PC-3 (cell line): ENCODE measurements at regions of chr3 and their contacts with region 1.

Region 1: GRCh38 chr3:16828815-16829214 is 55.9 kb upstream of the PLCL2 start:
- DNase-seq: peak; percentile 84
- ATAC-seq: peak; percentile 86
- H3K4me3 ChIP-seq: no peak overlapping the region
- H3K27ac ChIP-seq: peak overlapping the region; percentile 35
- H3K4me1 ChIP-seq: peaks cover 14% of the 10 kb centered on the region
- H3K27me3 ChIP-seq: no peaks in the 10 kb centered on the region
- CTCF ChIP-seq: peak; percentile 80

Region 2: GRCh38 chr3:16768959-16769358 is 59.9 kb before region 1 on chr3:
- CTCF ChIA-PET with region 1: no interaction called
- POLR2A ChIA-PET with region 1: no interaction called
- intact Hi-C with region 1: no loop called
- DNase-seq: peak; percentile 21
- ATAC-seq: no peak
- H3K4me3 ChIP-seq: no peak overlapping the region
- H3K27ac ChIP-seq: no peak overlapping the region
- H3K4me1 ChIP-seq: peaks cover 22% of the 10 kb centered on the region
- H3K27me3 ChIP-seq: no peaks in the 10 kb centered on the region
- CTCF ChIP-seq: no peak

Region 3: DNA sequence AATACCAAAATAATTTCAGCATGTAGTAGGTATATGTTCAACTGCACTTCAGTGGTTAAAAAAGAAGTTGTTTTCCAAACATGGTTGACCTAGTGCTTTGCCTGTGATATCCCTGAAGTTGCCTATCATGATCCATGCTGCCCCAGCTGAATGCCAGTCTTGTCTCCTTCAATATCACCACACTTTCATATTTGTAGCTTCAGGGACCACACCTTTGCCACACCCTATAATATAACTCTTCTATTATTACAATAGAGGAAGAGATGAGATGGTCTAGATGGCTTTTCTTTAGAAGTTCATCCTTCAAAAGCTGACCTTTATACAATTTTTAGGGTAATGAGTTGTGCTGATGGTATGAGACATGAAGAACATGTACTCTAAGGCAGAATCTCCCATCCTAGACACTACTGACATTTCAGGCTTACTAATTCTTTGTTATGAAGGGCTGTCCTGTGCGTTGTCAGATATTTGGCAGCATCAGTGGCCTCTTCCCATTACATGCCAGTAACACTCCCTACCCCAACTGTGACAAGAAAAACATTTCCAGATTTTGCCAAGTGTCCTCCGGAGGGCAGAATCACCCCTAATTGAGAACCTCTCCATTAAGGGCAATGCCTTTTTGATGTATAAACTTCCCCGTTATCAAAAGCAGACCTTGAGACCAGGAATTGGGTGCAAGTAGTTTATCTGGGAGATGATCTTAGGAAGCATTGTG is 20.3 kb before region 1 on chr3:
- CTCF ChIA-PET with region 1: interaction called, 10 read pairs
- POLR2A ChIA-PET with region 1: no interaction called
- intact Hi-C with region 1: no loop called
- DNase-seq: peak; percentile 22
- ATAC-seq: peak; percentile 18; the same call in 1 of the 2 replicates
- H3K4me3 ChIP-seq: no peak overlapping the region
- H3K27ac ChIP-seq: no peak overlapping the region
- H3K4me1 ChIP-seq: no peaks in the 10 kb centered on the region
- H3K27me3 ChIP-seq: no peaks in the 10 kb centered on the region
- CTCF ChIP-seq: peak; percentile 24; the same call in 1 of the 2 replicates

Region 4: DNA sequence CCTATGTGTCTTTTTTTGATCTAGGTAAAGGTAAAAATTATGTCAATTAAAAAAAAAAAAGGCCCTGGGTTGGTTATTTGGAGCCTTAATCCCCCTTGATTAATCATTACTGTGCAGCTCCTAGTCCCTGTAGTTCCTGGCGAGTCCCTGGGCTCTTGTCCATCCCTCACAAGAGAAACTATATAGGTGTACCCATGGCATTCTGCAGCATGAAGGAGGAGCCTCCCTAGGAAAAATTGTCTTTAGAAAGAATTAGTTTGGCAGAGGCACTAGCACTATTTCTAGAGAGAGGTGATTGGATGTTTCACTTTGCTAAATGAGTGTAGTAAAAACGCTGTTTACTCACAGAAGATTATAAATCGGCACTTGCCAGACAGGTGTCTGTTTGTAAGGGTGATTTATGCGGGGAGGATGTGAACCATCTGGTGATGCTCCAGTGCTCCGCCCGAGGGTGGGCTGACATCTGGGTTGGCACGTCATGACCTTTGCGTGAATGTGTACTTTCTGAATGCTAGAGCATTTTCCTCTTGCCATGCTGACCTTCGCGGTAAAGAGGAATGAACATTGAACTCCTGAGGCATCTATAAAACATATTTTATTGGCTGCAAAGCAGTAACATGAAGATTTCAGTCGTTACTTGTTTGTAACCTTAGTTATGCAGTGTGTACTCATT is 68.6 kb after region 1 on chr3:
- CTCF ChIA-PET with region 1: interaction called, 9 read pairs
- POLR2A ChIA-PET with region 1: no interaction called
- intact Hi-C with region 1: loop called (anchors 1 kb)
- DNase-seq: peak; percentile 94
- ATAC-seq: peak; percentile 86
- H3K4me3 ChIP-seq: peak overlapping the region; percentile 52
- H3K27ac ChIP-seq: peak overlapping the region; percentile 85
- H3K4me1 ChIP-seq: peaks cover 25% of the 10 kb centered on the region
- H3K27me3 ChIP-seq: no peaks in the 10 kb centered on the region
- CTCF ChIP-seq: no peak

Region 5: DNA sequence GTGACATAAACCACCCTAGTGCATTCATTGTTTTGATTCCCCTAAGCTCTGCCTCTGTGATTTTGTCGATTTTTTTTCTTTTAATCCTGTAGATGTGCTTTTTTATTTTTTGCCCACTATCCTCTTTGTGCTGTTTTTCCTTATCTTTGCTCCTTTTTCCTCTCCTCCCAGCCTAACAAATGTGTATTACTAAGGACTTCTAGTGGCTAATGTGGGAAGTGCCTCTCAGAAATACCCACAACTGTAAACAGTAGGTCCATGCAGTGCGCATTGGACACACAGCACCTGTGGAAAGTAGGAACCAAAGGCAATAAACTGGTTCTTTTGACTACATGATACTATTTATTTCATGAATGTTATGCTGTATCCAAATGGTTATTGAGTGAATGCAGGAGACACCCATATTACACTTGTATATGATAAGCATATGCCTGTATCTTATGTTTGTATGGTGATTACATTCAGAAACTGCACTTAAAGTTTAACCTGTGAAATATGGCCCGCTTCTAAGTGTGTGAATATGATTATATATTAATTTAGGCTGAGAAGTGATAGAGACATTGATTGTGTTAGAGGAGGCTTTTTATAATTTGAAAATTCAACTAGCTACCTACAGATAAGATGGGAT is 203.7 kb after region 1 on chr3:
- CTCF ChIA-PET with region 1: no interaction called
- POLR2A ChIA-PET with region 1: interaction called, 4 read pairs
- intact Hi-C with region 1: loop called (anchors 1 kb)
- DNase-seq: peak; percentile 70
- ATAC-seq: peak; percentile 84
- H3K4me3 ChIP-seq: no peak overlapping the region
- H3K27ac ChIP-seq: no peak overlapping the region
- H3K4me1 ChIP-seq: peaks cover 15% of the 10 kb centered on the region
- H3K27me3 ChIP-seq: no peaks in the 10 kb centered on the region
- CTCF ChIP-seq: peak; percentile 95

Region 6: GRCh38 chr3:17233398-17233800 is 404.6 kb after region 1 on chr3:
- CTCF ChIA-PET with region 1: interaction called, 3 read pairs
- POLR2A ChIA-PET with region 1: no interaction called
- intact Hi-C with region 1: loop called (anchors 1 kb)
- DNase-seq: peak; percentile 97
- ATAC-seq: peak; percentile 99
- H3K4me3 ChIP-seq: no peak overlapping the region
- H3K27ac ChIP-seq: no peak overlapping the region
- H3K4me1 ChIP-seq: peaks cover 18% of the 10 kb centered on the region
- H3K27me3 ChIP-seq: no peaks in the 10 kb centered on the region
- CTCF ChIP-seq: peak; percentile 93